ENCODE measurements at regions of chr15 and their contacts with region 1.

Region 1: DNA sequence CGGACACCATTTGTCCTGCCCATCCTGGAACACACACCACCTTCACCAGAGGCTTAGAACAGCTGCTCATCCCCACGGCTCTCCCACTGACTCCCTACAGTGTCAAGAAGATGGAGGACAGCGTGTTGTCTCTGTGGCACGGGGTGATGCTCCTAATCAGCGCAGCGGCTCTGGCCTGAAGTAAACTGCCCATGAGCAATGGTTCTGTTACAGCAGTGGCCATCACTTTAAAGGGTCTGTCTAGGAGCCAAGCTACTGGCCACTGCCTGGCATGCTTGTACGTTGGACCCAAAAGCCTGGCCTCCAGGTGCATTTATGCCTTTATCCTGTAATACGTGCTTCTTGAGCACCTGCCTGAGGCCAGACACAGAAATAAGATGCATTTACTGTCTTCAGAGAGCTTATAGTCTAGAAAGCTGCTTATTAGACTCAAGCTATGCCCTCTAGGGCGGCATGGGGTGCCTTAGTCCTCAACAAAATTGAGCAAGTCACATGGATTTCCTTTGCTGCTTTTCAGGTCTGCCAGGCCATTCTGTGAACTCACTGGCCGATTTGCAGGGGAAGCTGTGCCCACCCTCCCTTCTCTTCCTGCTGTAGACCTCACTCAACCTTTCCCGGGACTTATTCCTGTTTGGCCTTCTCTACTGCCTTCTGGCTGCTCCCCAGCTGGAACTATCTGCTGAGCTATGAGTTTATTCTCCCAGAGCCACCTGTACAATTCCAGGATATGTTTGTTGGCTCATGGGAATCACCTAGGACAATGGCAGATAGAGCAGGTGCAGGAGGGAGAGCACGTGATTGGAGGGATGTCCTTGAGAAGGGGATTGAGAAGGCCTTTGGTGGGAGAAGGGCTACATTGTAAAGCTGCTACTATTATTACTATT is 51.9 kb downstream of the STARD5 start:
- DNase-seq: no peak
- H3K4me3 ChIP-seq: no peak overlapping the region
- H3K27ac ChIP-seq: no peak overlapping the region
- H3K4me1 ChIP-seq: peaks cover 0 to 11% (median 4%) of the 10 kb centered on the region in 4 donors
- H3K27me3 ChIP-seq: no peaks in the 10 kb centered on the region
- CTCF ChIP-seq: no peak

Region 2: GRCh38 chr15:80026754-80027153 is 1245.2 kb before region 1 on chr15:
- intact Hi-C with region 1: no loop called
- DNase-seq: no peak
- H3K4me3 ChIP-seq: no peak overlapping the region
- H3K27ac ChIP-seq: no peak overlapping the region
- H3K4me1 ChIP-seq: no peaks in the 10 kb centered on the region
- H3K27me3 ChIP-seq: peaks cover 0 to 8% of the 10 kb centered on the region in 2 donors
- CTCF ChIP-seq: no peak

Region 3: GRCh38 chr15:80856809-80857377 is 415.1 kb before region 1 on chr15:
- intact Hi-C with region 1: no loop called
- DNase-seq: no peak
- H3K4me3 ChIP-seq: no peak overlapping the region
- H3K27ac ChIP-seq: no peak overlapping the region
- H3K4me1 ChIP-seq: peaks cover 0 to 21% (median 14%) of the 10 kb centered on the region in 4 donors
- H3K27me3 ChIP-seq: no peaks in the 10 kb centered on the region
- CTCF ChIP-seq: no peak

Region 4: GRCh38 chr15:81400640-81401236 is 128.7 kb after region 1 on chr15:
- intact Hi-C with region 1: loop called (anchors 2 kb)
- DNase-seq: no peak
- H3K4me3 ChIP-seq: no peak overlapping the region
- H3K27ac ChIP-seq: no peak overlapping the region
- H3K4me1 ChIP-seq: no peaks in the 10 kb centered on the region
- H3K27me3 ChIP-seq: peaks cover 0 to 3% of the 10 kb centered on the region in 2 donors
- CTCF ChIP-seq: peak; percentile 81 to 85